Endothelial cell of umbilical vein (primary cell): ENCODE measurements at regions of chr2 and their contacts with region 1.

Region 1: GRCh38 chr2:121530212-121530705 is 421 bp upstream of the RNU4ATAC start:
- DNase-seq: peak; percentile 87
- H3K4me3 ChIP-seq: peak overlapping the region; percentile 47 to 95 (median 65)
- H3K27ac ChIP-seq: peak overlapping the region; percentile 96
- H3K4me1 ChIP-seq: peaks cover 18% of the 10 kb centered on the region
- H3K27me3 ChIP-seq: no peaks in the 10 kb centered on the region
- CTCF ChIP-seq: no peak
- POLR2A ChIP-seq: no peak

Region 2: GRCh38 chr2:120503793-120504571 is 1026.3 kb before region 1 on chr2:
- CTCF ChIA-PET with region 1: no interaction called
- POLR2A ChIA-PET with region 1: interaction called, 14 read pairs
- dilution Hi-C with region 1: no loop called
- intact Hi-C with region 1: no loop called
- DNase-seq: peak; percentile 29
- H3K4me3 ChIP-seq: no peak overlapping the region
- H3K27ac ChIP-seq: no peak overlapping the region
- H3K4me1 ChIP-seq: peaks cover 8% of the 10 kb centered on the region
- H3K27me3 ChIP-seq: peaks cover 13 to 38% of the 10 kb centered on the region in 2 experiments
- CTCF ChIP-seq: no peak
- POLR2A ChIP-seq: no peak

Region 3: GRCh38 chr2:121245913-121246312 is 284.3 kb before region 1 on chr2:
- CTCF ChIA-PET with region 1: no interaction called
- POLR2A ChIA-PET with region 1: no interaction called
- dilution Hi-C with region 1: no loop called
- intact Hi-C with region 1: no loop called
- DNase-seq: no peak
- H3K4me3 ChIP-seq: no peak overlapping the region
- H3K27ac ChIP-seq: no peak overlapping the region
- H3K4me1 ChIP-seq: no peaks in the 10 kb centered on the region
- H3K27me3 ChIP-seq: no peaks in the 10 kb centered on the region
- CTCF ChIP-seq: no peak
- POLR2A ChIP-seq: no peak

Region 4: GRCh38 chr2:121387591-121388325 is 142.5 kb before region 1 on chr2:
- CTCF ChIA-PET with region 1: no interaction called
- POLR2A ChIA-PET with region 1: no interaction called
- dilution Hi-C with region 1: no loop called
- intact Hi-C with region 1: no loop called
- DNase-seq: no peak
- H3K4me3 ChIP-seq: no peak overlapping the region
- H3K27ac ChIP-seq: no peak overlapping the region
- H3K4me1 ChIP-seq: no peaks in the 10 kb centered on the region
- H3K27me3 ChIP-seq: no peaks in the 10 kb centered on the region
- CTCF ChIP-seq: no peak
- POLR2A ChIP-seq: no peak

Region 5: DNA sequence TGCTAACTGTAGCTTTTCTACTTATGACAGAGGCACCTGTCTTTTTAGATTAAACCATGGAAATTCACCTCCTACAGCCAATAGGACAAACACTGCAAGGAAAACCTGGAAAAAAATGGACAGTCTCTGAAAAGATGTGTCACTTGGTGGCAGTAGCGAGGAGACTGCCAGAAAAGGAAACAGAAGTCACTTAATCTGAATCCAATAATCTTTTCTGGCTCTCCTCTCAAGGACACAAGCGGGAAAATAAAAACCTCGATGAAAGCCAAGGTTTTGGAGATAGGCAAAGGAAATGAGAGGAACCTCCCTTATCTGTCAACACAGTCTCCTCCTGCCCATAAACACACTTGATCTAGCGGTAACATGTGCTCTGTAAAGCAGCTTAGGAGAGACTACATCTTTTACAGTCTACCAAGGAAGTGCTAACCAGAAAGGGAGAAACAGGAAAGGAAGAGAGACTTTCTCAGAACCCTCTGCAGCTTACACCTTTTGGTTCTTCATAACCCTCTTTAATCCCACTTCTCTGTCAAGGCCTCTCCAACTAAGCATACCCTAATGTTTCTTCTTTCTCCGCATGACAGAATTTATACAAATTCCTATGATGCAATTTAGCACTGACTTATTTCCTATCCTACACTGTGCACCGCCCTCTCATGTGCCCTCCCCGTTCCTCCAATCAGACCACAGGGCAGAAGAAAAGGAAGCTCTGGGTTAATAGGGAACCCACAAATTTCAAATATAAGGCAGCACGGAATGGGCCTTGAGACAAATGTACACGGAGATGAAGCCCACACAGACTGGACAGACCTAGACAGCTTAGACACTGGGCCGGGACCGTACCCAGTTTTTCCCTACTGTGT is 66.2 kb after region 1 on chr2:
- CTCF ChIA-PET with region 1: interaction called, 8 read pairs
- POLR2A ChIA-PET with region 1: interaction called, 5 read pairs
- dilution Hi-C with region 1: no loop called
- intact Hi-C with region 1: loop called (anchors 1 kb)
- DNase-seq: peak; percentile 81
- H3K4me3 ChIP-seq: peak overlapping the region in 2 of 3 experiments; percentile 3 to 62
- H3K27ac ChIP-seq: peak overlapping the region; percentile 56
- H3K4me1 ChIP-seq: peaks cover 14% of the 10 kb centered on the region
- H3K27me3 ChIP-seq: no peaks in the 10 kb centered on the region
- CTCF ChIP-seq: peak; percentile 29 to 35
- POLR2A ChIP-seq: no peak

Region 6: DNA sequence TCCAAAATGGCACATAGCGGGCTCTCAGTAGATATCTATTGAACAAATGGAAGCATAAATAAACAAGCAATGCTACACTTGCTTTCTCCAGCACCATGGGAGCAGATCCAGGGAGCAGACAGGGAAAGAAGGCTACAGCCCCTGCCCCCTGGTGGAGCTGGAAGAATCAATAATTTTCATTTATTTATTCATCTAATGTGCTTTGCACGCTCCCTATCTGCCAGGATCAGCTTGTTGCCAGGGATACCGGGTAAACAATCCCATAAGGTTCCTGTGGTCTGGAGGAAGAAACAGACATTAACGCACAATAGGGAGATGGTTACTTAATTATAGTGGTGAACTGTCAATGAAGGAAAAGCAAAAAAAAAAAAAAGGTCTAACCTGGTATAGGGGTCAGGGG is 159.1 kb after region 1 on chr2:
- CTCF ChIA-PET with region 1: interaction called, 22 read pairs
- POLR2A ChIA-PET with region 1: interaction called, 11 read pairs
- dilution Hi-C with region 1: no loop called
- intact Hi-C with region 1: loop called (anchors 1 kb)
- DNase-seq: peak; percentile 77
- H3K4me3 ChIP-seq: no peak overlapping the region
- H3K27ac ChIP-seq: no peak overlapping the region
- H3K4me1 ChIP-seq: no peaks in the 10 kb centered on the region
- H3K27me3 ChIP-seq: no peaks in the 10 kb centered on the region
- CTCF ChIP-seq: peak; percentile 37 to 50
- POLR2A ChIP-seq: no peak

Region 7: GRCh38 chr2:121722479-121722878 is 192.2 kb after region 1 on chr2:
- CTCF ChIA-PET with region 1: interaction called, 68 read pairs
- POLR2A ChIA-PET with region 1: interaction called, 11 read pairs
- dilution Hi-C with region 1: no loop called
- intact Hi-C with region 1: loop called (anchors 1 kb)
- DNase-seq: no peak
- H3K4me3 ChIP-seq: no peak overlapping the region
- H3K27ac ChIP-seq: no peak overlapping the region
- H3K4me1 ChIP-seq: no peaks in the 10 kb centered on the region
- H3K27me3 ChIP-seq: no peaks in the 10 kb centered on the region
- CTCF ChIP-seq: no peak
- POLR2A ChIP-seq: no peak

Region 8: DNA sequence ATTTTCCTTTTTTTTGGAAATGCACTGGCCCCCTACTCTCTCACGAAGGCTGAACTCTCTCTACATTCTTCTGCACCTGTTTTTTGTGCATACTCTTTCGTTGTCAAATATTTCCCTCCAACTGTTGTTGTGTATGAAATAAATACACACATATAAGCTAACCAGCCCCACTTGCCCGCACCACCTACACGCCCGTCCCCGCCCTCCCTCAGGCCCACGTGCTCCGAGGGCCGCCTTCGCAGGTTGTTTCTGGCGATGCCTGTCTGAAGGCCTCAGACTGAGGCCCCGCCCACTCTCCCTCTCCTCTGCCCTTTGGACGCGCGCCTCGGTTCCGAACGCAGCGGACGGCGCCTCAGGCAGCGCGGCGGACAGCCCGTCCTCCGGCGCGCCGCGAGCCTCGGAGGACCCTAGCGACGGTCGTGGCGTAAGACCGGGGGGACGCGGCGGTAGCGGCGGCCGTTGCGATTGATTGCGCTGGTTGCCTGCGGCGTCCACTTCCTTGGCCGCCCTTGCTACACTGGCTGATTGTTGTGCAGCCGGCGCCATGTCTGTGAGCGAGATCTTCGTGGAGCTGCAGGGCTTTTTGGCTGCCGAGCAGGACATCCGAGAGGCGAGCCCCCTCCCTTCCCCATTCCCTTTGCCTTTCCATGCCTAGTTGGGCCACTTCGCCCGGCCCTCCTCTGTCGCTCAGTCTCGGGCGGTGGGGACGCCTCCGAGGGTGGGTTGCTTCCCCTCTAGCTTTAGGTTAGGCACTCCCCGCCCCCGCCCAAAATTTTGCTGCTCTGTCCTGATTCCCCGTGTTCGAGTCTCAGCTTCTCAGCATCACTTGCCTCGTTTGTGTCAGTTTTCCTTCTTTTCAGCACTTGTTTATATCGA is 225.2 kb after region 1 on chr2 and contains the start of gene TSN:
- CTCF ChIA-PET with region 1: no interaction called
- POLR2A ChIA-PET with region 1: interaction called, 4 read pairs
- dilution Hi-C with region 1: no loop called
- intact Hi-C with region 1: loop called (anchors 2 kb)
- DNase-seq: peak; percentile 98
- H3K4me3 ChIP-seq: peak within 1 kb of the TSS; percentile 83 to 97 (median 89)
- H3K27ac ChIP-seq: peak within 1 kb of the TSS; percentile 75
- H3K4me1 ChIP-seq: peaks cover 16% of the 10 kb centered on the region
- H3K27me3 ChIP-seq: no peaks in the 10 kb centered on the region
- CTCF ChIP-seq: no peak
- POLR2A ChIP-seq: peak; percentile 43
- total RNA-seq, gene TSN: 76.1 and 79.8 TPM in 2 replicates